ENCODE measurements at regions of chr11 and their contacts with region 1.

Region 1: DNA sequence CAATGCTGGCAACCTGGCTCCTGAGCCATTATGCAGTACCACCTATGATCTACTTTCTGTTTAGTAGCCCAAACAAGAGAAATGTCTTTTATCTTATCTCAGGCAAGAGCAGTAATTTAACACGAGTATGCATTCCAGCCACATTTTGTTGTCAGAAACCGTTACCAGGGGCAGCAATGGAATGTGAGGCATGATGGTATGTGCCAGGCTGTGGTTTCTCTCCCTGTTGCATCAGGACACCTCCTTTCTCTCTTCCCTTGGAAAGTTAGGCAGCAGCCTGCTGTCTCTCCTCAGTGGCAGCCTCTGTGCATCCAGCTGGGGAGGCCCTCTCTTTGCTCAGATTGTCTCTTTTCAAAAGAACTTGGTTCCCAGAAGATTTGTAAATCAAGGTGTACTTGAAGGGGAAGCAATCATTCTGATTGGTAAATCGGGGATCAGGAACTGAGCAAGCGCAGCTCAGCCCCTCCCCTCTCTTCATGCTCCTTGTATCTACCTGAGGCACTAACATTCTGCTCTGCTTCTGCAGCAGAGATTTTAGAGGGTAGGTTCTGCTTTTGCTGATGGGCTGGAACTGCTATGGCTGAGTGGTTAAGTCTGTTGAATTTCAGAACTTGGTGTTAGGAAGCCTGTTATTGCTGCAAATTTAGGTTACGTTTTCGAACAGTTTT is 229.2 kb downstream of the ADAMTS15 start:
- DNase-seq: no peak
- H3K4me3 ChIP-seq: no peak overlapping the region
- H3K27ac ChIP-seq: peak overlapping the region in 3 of 4 donors; percentile 78 to 87 (median 85)
- H3K4me1 ChIP-seq: peaks cover 0 to 53% (median 50%) of the 10 kb centered on the region in 4 donors
- H3K27me3 ChIP-seq: no peaks in the 10 kb centered on the region
- CTCF ChIP-seq: no peak
- EP300 ChIP-seq: no peak
- POLR2A ChIP-seq: no peak

Region 2: DNA sequence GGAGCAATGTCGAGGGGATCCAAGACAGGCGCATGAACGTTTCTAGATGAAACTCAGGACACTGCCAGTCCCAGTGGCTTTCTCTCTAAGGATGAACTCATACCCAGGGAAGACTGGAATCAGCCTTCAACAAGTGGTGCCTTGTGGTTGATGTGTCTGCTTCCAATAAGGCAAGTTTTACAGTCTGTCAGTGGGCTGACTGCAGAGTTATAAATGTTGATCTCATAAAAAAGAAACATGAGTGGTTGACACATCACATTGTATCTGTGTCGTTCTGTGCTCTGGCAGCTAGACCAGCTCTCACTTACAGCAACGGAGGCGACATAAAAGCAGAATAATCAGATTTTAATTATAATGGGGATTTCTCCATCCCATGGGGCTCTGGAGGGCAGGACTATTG is 142.0 kb after region 1 on chr11:
- intact Hi-C with region 1: loop called (anchors 5 kb)
- DNase-seq: no peak
- H3K4me3 ChIP-seq: no peak overlapping the region
- H3K27ac ChIP-seq: no peak overlapping the region
- H3K4me1 ChIP-seq: peaks cover 0 to 3% (median 0%) of the 10 kb centered on the region in 4 donors
- H3K27me3 ChIP-seq: no peaks in the 10 kb centered on the region
- CTCF ChIP-seq: no peak
- EP300 ChIP-seq: no peak
- POLR2A ChIP-seq: no peak

Measured in sigmoid colon (tissue), 7 donors.